Head of caudate nucleus (tissue), 42 donors: ENCODE measurements at regions of chr16 and their contacts with region 1.

Region 1: GRCh38 chr16:30922960-30923535 is 324 bp upstream of the FBXL19 start:
- DNase-seq: peak; percentile 98 to 100 (median 100)

Region 2: GRCh38 chr16:30805370-30806169 is 117.5 kb before region 1 on chr16:
- intact Hi-C with region 1: loop called (anchors 10 kb)
- DNase-seq: peak; percentile 70 to 96 (median 90)

Region 3: DNA sequence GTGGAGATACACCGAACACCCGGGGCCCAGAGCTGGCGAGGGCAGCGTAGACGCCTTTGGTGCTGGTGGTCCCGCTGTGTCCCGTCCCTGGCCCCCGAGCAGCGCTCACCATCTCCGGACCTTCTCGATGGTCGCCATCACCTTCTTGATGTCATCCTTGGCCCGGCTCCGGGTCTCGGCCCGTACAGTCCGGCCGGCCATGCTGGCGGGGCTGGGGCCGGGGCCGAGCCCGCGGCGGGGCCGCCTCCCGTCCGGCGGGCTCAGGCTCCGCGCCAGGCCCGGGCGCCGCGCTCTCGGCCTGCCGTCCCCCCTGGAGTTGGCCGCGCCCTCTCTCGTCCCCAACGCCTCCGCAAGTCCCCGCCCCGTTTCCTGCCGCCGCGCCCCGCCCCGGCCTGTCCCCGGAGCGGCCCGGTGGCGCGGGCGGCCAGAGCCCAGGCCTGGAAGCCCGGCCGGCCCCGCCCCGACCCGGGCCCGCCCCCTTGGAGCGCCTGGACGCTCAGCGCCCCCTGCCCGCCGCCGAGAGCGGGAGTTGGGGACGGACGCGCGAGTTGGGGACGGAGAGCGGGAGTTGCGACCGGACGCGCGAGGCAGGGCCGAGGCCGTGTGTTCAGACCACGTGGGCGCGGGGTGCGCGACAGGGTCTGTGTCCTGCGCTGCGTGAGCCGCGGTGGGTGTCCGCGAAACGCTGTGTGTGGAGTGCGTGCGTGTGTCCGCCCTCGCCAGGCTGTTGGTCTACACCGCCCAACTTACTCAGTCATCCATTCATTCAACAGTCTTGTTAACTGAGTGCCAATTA is 29.1 kb before region 1 on chr16 and contains the start of gene BCL7C:
- intact Hi-C with region 1: loop called (anchors 2 kb)
- DNase-seq: peak; percentile 36 to 94 (median 88)